H1 (cell line): ENCODE measurements at regions of chr19 and their contacts with region 1.

Region 1: DNA sequence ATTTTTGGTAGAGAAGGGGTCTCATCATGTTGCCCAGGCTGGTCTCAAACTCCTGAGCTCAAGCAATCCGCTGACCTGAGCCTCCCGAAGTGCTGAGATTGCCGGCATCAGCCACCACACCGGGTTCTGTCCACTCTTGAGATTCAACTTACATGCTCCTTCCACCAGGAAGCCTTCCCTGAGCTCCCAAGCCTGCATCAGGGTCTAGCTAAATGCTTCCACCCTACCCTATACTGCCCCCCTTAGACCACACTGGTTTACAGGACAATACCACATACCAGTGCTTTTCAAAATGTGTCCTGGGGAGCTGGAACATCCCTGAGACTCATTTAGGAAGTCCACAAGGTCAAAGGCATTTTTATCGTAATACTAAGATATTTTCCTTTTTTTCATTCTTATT is 15.1 kb upstream of the CACNG8 start:
- DNase-seq: no peak
- H3K4me3 ChIP-seq: no peak overlapping the region
- H3K27ac ChIP-seq: no peak overlapping the region
- H3K4me1 ChIP-seq: peaks cover 0 to 14% (median 7%) of the 10 kb centered on the region in 4 experiments; a peak in 4 of 7 replicates
- H3K27me3 ChIP-seq: no peaks in the 10 kb centered on the region
- CTCF ChIP-seq: peak; percentile 32 to 74 (median 67)
- EP300 ChIP-seq: no peak
- POLR2A ChIP-seq: no peak
- RAD21 ChIP-seq: peak; percentile 65 to 74

Region 2: DNA sequence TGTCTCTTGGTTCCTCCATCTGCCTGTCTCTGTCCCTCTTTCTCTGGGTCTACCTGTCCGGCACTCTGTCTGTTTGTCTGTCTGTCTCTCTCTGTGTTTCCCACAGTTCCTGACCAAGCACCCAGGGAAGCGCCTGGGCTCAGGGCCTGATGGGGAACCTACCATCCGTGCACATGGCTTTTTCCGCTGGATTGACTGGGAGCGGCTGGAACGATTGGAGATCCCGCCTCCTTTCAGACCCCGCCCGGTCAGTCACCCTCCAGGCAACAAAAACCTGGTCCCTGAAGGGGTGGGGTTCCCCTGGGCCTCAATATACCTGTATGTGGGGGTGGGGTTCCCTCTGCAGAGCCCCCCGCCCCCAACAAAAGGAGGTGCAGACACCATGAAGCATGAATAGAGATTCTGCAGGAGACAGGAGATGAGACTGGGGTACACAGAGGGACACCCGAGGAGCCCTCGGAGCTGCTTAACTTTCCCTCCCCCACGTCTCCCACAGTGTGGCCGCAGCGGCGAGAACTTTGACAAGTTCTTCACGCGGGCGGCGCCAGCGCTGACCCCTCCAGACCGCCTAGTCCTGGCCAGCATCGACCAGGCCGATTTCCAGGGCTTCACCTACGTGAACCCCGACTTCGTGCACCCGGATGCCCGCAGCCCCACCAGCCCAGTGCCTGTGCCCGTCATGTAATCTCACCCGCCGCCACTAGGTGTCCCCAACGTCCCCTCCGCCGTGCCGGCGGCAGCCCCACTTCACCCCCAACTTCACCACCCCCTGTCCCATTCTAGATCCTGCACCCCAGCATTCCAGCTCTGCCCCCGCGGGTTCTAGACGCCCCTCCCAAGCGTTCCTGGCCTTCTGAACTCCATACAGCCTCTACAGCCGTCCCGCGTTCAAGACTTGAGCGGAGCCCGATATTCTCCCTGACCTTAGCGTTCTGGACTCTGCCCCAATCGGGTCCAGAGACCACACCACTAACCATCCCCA is 41.1 kb before region 1 on chr19:
- CTCF ChIA-PET with region 1: interaction called, 52 read pairs
- POLR2A ChIA-PET with region 1: interaction called, 10 read pairs
- DNase-seq: peak in 1 of 2 experiments; percentile 97
- H3K4me3 ChIP-seq: peak overlapping the region; percentile 34 to 72 (median 44)
- H3K27ac ChIP-seq: no peak overlapping the region
- H3K4me1 ChIP-seq: peaks cover 0 to 14% (median 4%) of the 10 kb centered on the region in 4 experiments; a peak in 5 of 7 replicates
- H3K27me3 ChIP-seq: peaks cover 0 to 22% (median 14%) of the 10 kb centered on the region in 4 experiments; a peak in 5 of 7 replicates
- CTCF ChIP-seq: peak; percentile 72 to 97 (median 82)
- EP300 ChIP-seq: no peak
- POLR2A ChIP-seq: no peak
- RAD21 ChIP-seq: peak; percentile 68 to 75

Region 3: GRCh38 chr19:53958168-53958571 is 10.5 kb after region 1 on chr19:
- CTCF ChIA-PET with region 1: interaction called, 23 read pairs
- POLR2A ChIA-PET with region 1: interaction called, 33 read pairs
- DNase-seq: peak in 1 of 2 experiments; percentile 83
- H3K4me3 ChIP-seq: peak overlapping the region; percentile 17 to 61 (median 34); a peak in 7 of 8 replicates
- H3K27ac ChIP-seq: peak overlapping the region; percentile 83
- H3K4me1 ChIP-seq: peaks cover 7 to 20% (median 16%) of the 10 kb centered on the region in 4 experiments
- H3K27me3 ChIP-seq: peaks cover 0 to 3% (median 1%) of the 10 kb centered on the region in 4 experiments; a peak in 2 of 7 replicates
- CTCF ChIP-seq: no peak
- EP300 ChIP-seq: no peak
- POLR2A ChIP-seq: no peak
- RAD21 ChIP-seq: no peak

Region 4: GRCh38 chr19:53977429-53977990 is 29.9 kb after region 1 on chr19:
- CTCF ChIA-PET with region 1: interaction called, 10 read pairs
- POLR2A ChIA-PET with region 1: interaction called, 15 read pairs
- DNase-seq: peak in 1 of 2 experiments; percentile 86
- H3K4me3 ChIP-seq: peak overlapping the region; percentile 53 to 78 (median 67); a peak in 7 of 8 replicates
- H3K27ac ChIP-seq: no peak overlapping the region
- H3K4me1 ChIP-seq: peaks cover 4 to 14% (median 9%) of the 10 kb centered on the region in 4 experiments
- H3K27me3 ChIP-seq: no peaks in the 10 kb centered on the region; a peak in 2 of 7 replicates
- CTCF ChIP-seq: no peak
- EP300 ChIP-seq: no peak
- POLR2A ChIP-seq: no peak
- RAD21 ChIP-seq: peak in 1 of 2 experiments; percentile 30; a peak in 1 of 4 replicates

Region 5: DNA sequence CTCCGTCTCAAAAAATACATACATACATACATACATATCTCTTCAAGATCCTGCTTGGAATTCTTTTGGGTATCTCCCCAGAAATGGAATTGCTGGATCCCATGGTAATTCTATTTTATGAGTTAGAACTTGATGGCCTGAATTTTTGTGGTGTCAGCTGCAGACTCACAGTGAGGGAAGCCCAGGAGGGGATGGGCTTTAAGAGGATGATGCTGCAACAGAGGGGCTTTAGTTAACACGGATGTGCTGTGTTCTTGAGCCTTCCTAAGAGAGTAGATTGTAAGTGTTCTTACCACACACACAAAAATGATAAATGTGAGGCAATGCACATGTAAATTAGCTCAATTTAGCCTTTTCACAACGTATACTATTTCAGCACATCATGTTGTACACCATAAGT is 75.6 kb after region 1 on chr19:
- CTCF ChIA-PET with region 1: interaction called, 33 read pairs
- POLR2A ChIA-PET with region 1: interaction called, 3 read pairs
- DNase-seq: no peak
- H3K4me3 ChIP-seq: no peak overlapping the region
- H3K27ac ChIP-seq: no peak overlapping the region
- H3K4me1 ChIP-seq: peaks cover 0 to 6% (median 3%) of the 10 kb centered on the region in 4 experiments; a peak in 4 of 7 replicates
- H3K27me3 ChIP-seq: peaks cover 0 to 2% (median 0%) of the 10 kb centered on the region in 4 experiments; a peak in 1 of 7 replicates
- CTCF ChIP-seq: no peak
- EP300 ChIP-seq: no peak
- POLR2A ChIP-seq: no peak
- RAD21 ChIP-seq: no peak